ENCODE measurements at regions of chr2 and their contacts with region 1.

Region 1: GRCh38 chr2:197191177-197191939 is 119.2 kb downstream of the ANKRD44 start:
- DNase-seq: no peak
- ATAC-seq: peak; percentile 43
- H3K4me3 Mint-ChIP-seq: peak overlapping the region; percentile 27
- H3K27ac Mint-ChIP-seq: peak overlapping the region; percentile 44
- H3K4me1 Mint-ChIP-seq: peaks cover 78% of the 10 kb centered on the region
- H3K27me3 Mint-ChIP-seq: no peaks in the 10 kb centered on the region

Region 2: GRCh38 chr2:197072533-197072932 is 118.8 kb before region 1 on chr2:
- CTCF ChIA-PET with region 1: no interaction called
- POLR2A ChIA-PET with region 1: no interaction called
- DNase-seq: no peak
- ATAC-seq: no peak
- H3K4me3 Mint-ChIP-seq: no peak overlapping the region
- H3K27ac Mint-ChIP-seq: peak overlapping the region; percentile 3
- H3K4me1 Mint-ChIP-seq: peaks cover 30% of the 10 kb centered on the region
- H3K27me3 Mint-ChIP-seq: no peaks in the 10 kb centered on the region

Region 3: GRCh38 chr2:197168705-197169104 is 22.7 kb before region 1 on chr2:
- CTCF ChIA-PET with region 1: interaction called, 18 read pairs
- POLR2A ChIA-PET with region 1: no interaction called
- DNase-seq: peak; percentile 81
- ATAC-seq: peak; percentile 83
- H3K4me3 Mint-ChIP-seq: no peak overlapping the region
- H3K27ac Mint-ChIP-seq: peak overlapping the region; percentile 58
- H3K4me1 Mint-ChIP-seq: peaks cover 46% of the 10 kb centered on the region
- H3K27me3 Mint-ChIP-seq: no peaks in the 10 kb centered on the region

Region 4: GRCh38 chr2:197204519-197205250 is 13.3 kb after region 1 on chr2:
- CTCF ChIA-PET with region 1: interaction called, 79 read pairs
- POLR2A ChIA-PET with region 1: interaction called, 4 read pairs
- DNase-seq: no peak
- ATAC-seq: no peak
- H3K4me3 Mint-ChIP-seq: no peak overlapping the region
- H3K27ac Mint-ChIP-seq: peak overlapping the region; percentile 95
- H3K4me1 Mint-ChIP-seq: peaks cover 89% of the 10 kb centered on the region
- H3K27me3 Mint-ChIP-seq: no peaks in the 10 kb centered on the region

Region 5: GRCh38 chr2:197239434-197239833 is 48.1 kb after region 1 on chr2:
- CTCF ChIA-PET with region 1: interaction called, 14 read pairs
- POLR2A ChIA-PET with region 1: interaction called, 3 read pairs
- DNase-seq: no peak
- ATAC-seq: peak; percentile 57
- H3K4me3 Mint-ChIP-seq: peak overlapping the region; percentile 77
- H3K27ac Mint-ChIP-seq: peak overlapping the region; percentile 91
- H3K4me1 Mint-ChIP-seq: peaks cover 83% of the 10 kb centered on the region
- H3K27me3 Mint-ChIP-seq: no peaks in the 10 kb centered on the region

Region 6: GRCh38 chr2:197293252-197294007 is 102.1 kb after region 1 on chr2:
- CTCF ChIA-PET with region 1: interaction called, 13 read pairs
- POLR2A ChIA-PET with region 1: interaction called, 4 read pairs
- DNase-seq: peak; percentile 55
- ATAC-seq: peak; percentile 69
- H3K4me3 Mint-ChIP-seq: peak overlapping the region; percentile 71
- H3K27ac Mint-ChIP-seq: peak overlapping the region; percentile 93
- H3K4me1 Mint-ChIP-seq: peaks cover 87% of the 10 kb centered on the region
- H3K27me3 Mint-ChIP-seq: no peaks in the 10 kb centered on the region

Region 7: GRCh38 chr2:197310271-197310985 is 119.1 kb after region 1 on chr2 and contains the start of gene ANKRD44:
- CTCF ChIA-PET with region 1: interaction called, 69 read pairs
- POLR2A ChIA-PET with region 1: interaction called, 40 read pairs
- DNase-seq: peak; percentile 91
- ATAC-seq: peak; percentile 73
- H3K4me3 Mint-ChIP-seq: peak within 1 kb of the TSS; percentile 95
- H3K27ac Mint-ChIP-seq: peak within 1 kb of the TSS; percentile 95
- H3K4me1 Mint-ChIP-seq: peaks cover 57% of the 10 kb centered on the region
- H3K27me3 Mint-ChIP-seq: no peaks in the 10 kb centered on the region
- total RNA-seq, gene ANKRD44: 188 to 224 TPM

Region 8: GRCh38 chr2:197378494-197379307 is 187.3 kb after region 1 on chr2:
- CTCF ChIA-PET with region 1: interaction called, 11 read pairs
- POLR2A ChIA-PET with region 1: no interaction called
- DNase-seq: peak; percentile 75
- ATAC-seq: peak; percentile 77
- H3K4me3 Mint-ChIP-seq: no peak overlapping the region
- H3K27ac Mint-ChIP-seq: no peak overlapping the region
- H3K4me1 Mint-ChIP-seq: peaks cover 24% of the 10 kb centered on the region
- H3K27me3 Mint-ChIP-seq: peaks cover 4% of the 10 kb centered on the region